Activated CD4-positive, alpha-beta T cell treated with anti-CD3 and anti-CD28 coated beads for 36 hours (primary cell): ENCODE measurements at regions of chr17 and their contacts with region 1.

Region 1: DNA sequence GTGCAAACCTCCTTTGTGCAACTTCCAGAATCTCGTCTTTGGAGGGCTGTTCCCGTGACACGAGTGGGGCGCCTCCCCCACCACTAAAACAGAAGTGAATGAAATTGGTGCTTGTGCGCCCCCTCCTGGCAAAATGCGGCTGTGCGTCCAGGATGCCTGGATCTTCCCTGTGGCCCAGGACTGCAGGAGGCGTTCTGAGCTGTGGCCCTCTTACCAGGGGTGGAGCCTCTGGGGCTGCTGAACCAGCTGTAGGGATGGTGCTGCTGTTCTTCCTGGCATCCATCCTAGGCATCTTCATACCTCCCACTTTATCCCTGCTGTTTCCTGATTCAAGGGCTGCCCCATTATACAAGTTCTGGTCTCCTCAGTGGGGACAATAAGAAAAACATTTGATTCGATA is 18.5 kb upstream of the NAGLU start:
- DNase-seq: peak; percentile 89
- ATAC-seq: peak; percentile 92
- H3K4me3 Mint-ChIP-seq: no peak overlapping the region
- H3K27ac Mint-ChIP-seq: no peak overlapping the region
- H3K4me1 Mint-ChIP-seq: peaks cover 4% of the 10 kb centered on the region
- H3K27me3 Mint-ChIP-seq: peaks cover 2% of the 10 kb centered on the region

Region 2: GRCh38 chr17:42260318-42260717 is 257.2 kb before region 1 on chr17:
- CTCF ChIA-PET with region 1: no interaction called
- POLR2A ChIA-PET with region 1: no interaction called
- intact Hi-C with region 1: no loop called
- DNase-seq: no peak
- ATAC-seq: no peak
- H3K4me3 Mint-ChIP-seq: no peak overlapping the region
- H3K27ac Mint-ChIP-seq: no peak overlapping the region
- H3K4me1 Mint-ChIP-seq: peaks cover 39% of the 10 kb centered on the region
- H3K27me3 Mint-ChIP-seq: no peaks in the 10 kb centered on the region

Region 3: DNA sequence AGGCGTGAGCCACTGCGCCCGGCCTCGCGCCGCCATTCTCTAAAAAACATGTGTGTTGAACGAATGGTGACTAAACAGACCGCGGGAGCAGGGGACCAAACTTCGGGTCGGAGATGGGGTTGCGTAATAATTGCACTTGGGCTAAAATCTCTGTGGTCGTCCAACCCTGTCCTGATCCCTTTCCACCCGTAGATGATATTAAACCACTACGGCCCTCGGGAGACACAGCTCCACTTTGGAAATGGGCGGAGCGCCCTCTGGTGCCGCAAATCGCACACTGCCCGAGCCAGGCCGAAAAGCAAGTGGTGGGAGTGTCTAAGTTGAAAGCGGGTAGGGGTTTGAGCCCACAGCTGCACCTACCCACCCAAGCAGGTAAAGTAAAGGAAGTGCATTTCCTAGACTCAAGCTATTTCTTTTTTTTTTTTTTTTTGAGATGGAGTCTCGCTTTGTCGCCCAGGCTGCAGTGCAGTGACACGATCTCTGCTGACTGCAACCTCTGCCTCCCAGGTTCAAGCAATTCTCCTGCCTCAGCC is 111.5 kb before region 1 on chr17:
- CTCF ChIA-PET with region 1: interaction called, 10 read pairs
- POLR2A ChIA-PET with region 1: no interaction called
- intact Hi-C with region 1: no loop called
- DNase-seq: peak; percentile 91
- ATAC-seq: peak; percentile 69
- H3K4me3 Mint-ChIP-seq: no peak overlapping the region
- H3K27ac Mint-ChIP-seq: no peak overlapping the region
- H3K4me1 Mint-ChIP-seq: peaks cover 19% of the 10 kb centered on the region
- H3K27me3 Mint-ChIP-seq: no peaks in the 10 kb centered on the region

Region 4: DNA sequence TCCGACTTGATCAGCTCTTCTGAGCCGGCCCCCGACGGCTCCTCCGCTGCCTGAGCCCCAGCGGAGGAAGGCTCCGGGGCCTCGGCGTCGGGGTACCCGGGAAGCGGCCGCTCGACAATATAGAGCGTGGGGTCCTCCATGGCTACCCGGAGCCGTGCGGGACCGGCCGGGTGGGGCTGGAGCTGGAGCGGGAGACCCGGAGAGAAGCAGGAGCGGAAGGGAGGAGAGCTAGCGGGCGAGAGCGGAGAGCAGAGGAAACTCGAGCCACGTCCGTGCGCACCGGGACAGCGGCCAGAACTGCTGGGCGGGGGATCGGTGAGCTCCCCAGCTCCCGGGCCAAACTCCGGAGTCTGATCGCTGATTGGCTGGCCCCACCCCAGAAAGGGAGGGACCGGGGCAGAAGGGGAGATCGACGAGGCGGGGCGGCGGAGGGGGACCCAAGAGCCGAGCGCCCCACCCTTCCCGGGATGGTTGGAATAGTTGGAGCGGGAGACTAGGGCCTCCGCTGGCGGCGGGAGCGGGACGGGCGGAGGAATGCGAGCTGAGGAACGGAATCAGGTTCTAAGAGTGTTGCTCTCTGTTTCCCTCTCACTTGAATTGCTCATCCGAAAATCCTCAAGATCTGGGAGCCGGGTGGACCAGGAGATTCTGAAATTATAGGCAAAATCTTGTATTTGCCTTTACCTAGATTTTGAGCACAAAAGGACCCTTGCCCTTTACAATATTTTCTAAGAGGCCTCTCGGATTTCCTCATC is 94.4 kb before region 1 on chr17 and contains the start of gene CAVIN1:
- CTCF ChIA-PET with region 1: interaction called, 18 read pairs
- POLR2A ChIA-PET with region 1: interaction called, 5 read pairs
- intact Hi-C with region 1: loop called (anchors 1 to 2 kb)
- DNase-seq: peak; percentile 54
- ATAC-seq: peak; percentile 42
- H3K4me3 Mint-ChIP-seq: peak within 1 kb of the TSS; percentile 75
- H3K27ac Mint-ChIP-seq: peak within 1 kb of the TSS; percentile 48
- H3K4me1 Mint-ChIP-seq: peaks cover 19% of the 10 kb centered on the region
- H3K27me3 Mint-ChIP-seq: peaks cover 26% of the 10 kb centered on the region
- total RNA-seq, gene CAVIN1: 4.2 to 4.4 TPM

Region 5: DNA sequence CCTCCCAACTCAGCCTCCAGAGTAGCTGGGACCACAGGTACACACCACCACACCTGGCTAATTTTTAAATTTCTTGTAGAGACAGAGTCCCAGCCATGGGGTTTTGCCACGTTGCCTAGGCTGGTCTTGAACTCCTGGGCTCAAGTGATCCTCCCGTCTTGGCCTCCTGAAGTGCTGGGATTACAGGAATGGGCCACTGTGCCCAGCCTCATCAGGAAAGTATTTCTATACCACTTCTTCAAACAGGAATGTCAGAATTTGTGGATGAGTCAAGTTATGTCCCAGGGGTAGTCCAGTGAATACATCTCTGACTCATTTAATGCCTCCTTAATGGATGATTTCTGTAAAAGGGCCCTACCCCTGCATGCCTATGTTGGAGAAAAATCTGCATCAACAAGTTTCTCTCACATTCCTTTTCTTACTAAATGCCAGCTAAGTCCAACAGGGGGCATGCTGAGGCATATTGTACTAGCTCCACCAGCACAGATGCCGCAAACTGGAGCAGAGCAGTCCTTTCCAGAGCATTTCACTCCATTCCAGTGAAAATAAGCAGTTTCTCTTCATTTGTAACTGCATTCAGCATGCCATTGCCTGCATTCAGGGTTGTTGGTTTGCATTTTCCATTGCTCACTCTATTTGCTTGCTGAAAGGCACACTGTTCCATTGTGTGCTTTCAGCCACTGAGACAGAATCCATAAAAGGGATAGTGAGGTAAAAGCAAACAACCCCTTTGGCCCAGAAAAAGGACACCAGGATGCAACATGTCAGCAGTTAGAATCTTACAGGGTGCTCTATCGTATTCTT is 89.2 kb before region 1 on chr17:
- CTCF ChIA-PET with region 1: interaction called, 18 read pairs
- POLR2A ChIA-PET with region 1: interaction called, 5 read pairs
- intact Hi-C with region 1: loop called (anchors 1 to 2 kb)
- DNase-seq: peak; percentile 58
- ATAC-seq: peak; percentile 81
- H3K4me3 Mint-ChIP-seq: no peak overlapping the region
- H3K27ac Mint-ChIP-seq: no peak overlapping the region
- H3K4me1 Mint-ChIP-seq: no peaks in the 10 kb centered on the region
- H3K27me3 Mint-ChIP-seq: peaks cover 14% of the 10 kb centered on the region

Region 6: DNA sequence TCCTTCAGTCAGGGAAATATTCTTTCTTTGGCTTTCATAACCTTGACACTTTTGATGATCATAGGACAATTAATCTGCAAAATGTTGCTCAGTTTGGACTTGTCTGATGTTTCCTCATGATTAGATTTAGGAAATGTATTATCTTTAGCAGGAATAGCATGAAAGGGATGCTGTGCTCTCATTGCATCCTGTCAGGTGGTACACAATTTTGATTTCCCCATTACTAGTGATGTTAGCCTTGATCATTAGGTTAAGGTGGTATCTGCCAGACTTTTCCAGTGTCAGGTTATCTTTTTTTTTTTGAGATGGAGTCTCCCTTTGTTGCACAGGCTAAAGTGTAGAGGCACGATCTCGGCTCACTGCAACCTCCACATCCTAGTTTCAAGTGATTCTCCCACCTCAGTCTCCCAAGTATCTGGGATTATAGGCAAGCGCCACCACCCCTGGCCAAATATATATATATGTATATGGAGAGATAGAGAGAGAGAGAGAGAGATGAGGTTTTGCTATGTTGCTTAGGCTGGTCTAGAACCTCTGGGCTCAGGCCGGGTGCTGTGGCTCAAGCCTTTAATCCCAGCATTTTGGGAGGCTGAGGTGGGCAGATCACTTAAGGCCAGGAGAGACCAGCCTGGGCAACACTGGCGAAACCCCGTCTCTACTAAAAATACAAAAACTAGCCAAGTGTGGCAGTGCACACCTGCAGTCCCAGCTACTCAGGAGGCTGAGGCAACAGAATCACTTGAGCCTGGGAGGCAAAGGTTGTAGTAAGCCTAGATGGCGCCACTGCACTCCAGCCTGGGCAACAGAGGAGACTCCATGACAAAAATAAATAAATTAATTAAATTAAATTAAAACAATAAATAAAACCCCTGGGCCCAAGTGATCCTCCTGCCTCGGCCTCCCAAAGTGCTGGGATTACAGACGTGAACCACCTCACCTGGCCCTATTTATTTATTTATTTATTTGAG is 78.6 kb before region 1 on chr17:
- CTCF ChIA-PET with region 1: interaction called, 6 read pairs
- POLR2A ChIA-PET with region 1: no interaction called
- intact Hi-C with region 1: loop called (anchors 1 to 2 kb)
- DNase-seq: peak; percentile 70
- ATAC-seq: peak; percentile 61
- H3K4me3 Mint-ChIP-seq: no peak overlapping the region
- H3K27ac Mint-ChIP-seq: no peak overlapping the region
- H3K4me1 Mint-ChIP-seq: peaks cover 8% of the 10 kb centered on the region
- H3K27me3 Mint-ChIP-seq: peaks cover 2% of the 10 kb centered on the region

Region 7: GRCh38 chr17:43341715-43342588 is 824.4 kb after region 1 on chr17:
- CTCF ChIA-PET with region 1: no interaction called
- POLR2A ChIA-PET with region 1: no interaction called
- intact Hi-C with region 1: no loop called
- DNase-seq: peak; percentile 61
- ATAC-seq: peak; percentile 88
- H3K4me3 Mint-ChIP-seq: peak overlapping the region; percentile 0
- H3K27ac Mint-ChIP-seq: peak overlapping the region; percentile 92
- H3K4me1 Mint-ChIP-seq: peaks cover 36% of the 10 kb centered on the region
- H3K27me3 Mint-ChIP-seq: peaks cover 2% of the 10 kb centered on the region